ENCODE measurements at regions of chr5 and their contacts with region 1.

Region 1: DNA sequence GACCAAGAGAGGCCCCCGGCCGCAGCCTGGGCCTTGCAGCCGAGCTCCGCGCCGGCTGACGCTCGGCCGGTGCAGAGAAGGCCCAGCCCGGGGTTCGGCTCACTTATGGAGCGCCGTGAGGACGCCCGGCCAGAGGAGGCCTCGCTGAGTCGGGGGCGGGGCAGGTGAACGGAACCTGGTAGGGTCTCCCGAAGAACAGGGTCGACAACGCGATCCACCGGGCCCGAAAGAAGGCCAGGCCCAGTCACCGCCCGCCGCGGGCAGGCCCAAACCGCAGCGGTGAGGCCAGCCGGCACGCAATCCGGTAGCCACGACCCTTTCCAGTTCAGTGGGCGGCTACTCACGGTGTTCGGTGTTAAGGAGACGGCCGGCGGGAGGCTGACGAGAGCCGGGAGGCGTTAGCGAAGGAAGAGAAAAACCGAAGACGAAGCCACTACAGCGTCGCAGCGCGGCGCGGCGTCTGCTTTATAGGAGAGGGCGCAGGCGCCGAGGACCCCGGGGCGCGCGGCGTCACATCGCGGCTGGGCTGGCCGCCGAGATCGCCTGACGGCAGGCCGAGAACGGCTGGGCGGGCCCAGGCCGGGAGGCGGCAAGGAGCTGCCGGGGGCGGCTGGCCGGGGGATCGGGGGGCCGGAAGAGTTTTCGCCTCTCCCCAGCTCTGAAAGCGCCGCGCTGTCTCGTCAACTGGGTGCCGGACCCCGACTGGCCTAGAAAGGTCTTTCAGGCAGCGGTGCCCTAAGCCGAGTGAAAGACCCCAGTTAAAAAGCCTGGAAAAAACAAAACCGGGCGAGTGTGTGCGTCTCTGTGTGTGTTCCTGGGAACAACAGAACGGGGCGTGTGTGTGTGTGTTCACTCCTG is at the start of gene SKP1:
- DNase-seq: peak; percentile 89 to 94
- ATAC-seq: peak; percentile 96
- H3K4me3 ChIP-seq: peak within 1 kb of the TSS; percentile 39 to 89
- H3K27ac ChIP-seq: peak within 1 kb of the TSS; percentile 90 to 96
- H3K4me1 ChIP-seq: no peaks in the 10 kb centered on the region
- H3K27me3 ChIP-seq: no peaks in the 10 kb centered on the region
- total RNA-seq, gene SKP1: 304 to 330 TPM

Region 2: DNA sequence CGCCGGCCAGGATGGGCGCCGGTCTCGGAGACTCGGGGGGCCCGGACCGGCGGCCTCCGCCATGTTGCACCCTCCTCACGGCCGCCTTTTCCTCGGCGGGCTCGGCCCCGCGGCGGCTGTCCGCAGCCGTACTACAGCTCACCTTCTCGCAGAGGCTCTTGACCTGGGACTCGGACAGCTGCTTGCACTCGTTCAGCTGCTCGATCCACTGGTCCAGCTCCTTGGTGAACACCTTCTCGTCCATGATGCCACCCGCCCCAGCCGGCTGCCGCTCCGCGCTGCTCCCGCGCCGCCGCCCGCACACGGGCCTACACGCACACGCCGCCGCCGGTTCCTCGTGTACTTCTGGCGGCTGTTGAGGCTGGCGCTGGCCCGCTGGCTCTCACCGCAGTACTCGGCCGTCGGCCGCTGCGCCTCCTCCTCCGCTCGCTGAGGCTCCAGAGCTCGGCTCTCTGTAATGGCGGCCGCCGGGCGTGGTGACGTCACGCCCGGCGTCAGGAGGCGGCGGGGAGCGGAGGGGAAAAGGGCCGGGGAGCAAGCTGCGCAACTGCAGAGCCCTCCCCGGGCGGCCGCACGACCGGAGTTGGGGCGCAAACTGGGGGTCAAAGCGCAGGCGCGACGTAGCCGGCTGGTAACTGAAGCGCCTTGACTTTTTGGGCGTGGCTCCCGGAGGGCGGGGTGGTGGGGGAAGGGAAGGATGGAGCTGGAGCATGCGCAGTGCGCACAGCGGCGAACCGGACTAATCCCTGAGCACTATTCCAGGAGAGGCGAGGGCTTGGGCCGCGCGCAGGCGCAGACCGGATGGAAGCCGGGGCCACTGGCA is 49.1 kb after region 1 on chr5 and contains the start of gene PPP2CA:
- intact Hi-C with region 1: loop called in 1 of 2 experiments (anchors 2 kb)
- DNase-seq: peak; percentile 99 to 100
- ATAC-seq: peak; percentile 98
- H3K4me3 ChIP-seq: peak within 1 kb of the TSS; percentile 68 to 73
- H3K27ac ChIP-seq: peak within 1 kb of the TSS; percentile 88 to 95
- H3K4me1 ChIP-seq: peaks cover 0 to 4% of the 10 kb centered on the region in 2 donors
- H3K27me3 ChIP-seq: no peaks in the 10 kb centered on the region
- total RNA-seq, gene PPP2CA: 72.4 to 96.6 TPM

Region 3: DNA sequence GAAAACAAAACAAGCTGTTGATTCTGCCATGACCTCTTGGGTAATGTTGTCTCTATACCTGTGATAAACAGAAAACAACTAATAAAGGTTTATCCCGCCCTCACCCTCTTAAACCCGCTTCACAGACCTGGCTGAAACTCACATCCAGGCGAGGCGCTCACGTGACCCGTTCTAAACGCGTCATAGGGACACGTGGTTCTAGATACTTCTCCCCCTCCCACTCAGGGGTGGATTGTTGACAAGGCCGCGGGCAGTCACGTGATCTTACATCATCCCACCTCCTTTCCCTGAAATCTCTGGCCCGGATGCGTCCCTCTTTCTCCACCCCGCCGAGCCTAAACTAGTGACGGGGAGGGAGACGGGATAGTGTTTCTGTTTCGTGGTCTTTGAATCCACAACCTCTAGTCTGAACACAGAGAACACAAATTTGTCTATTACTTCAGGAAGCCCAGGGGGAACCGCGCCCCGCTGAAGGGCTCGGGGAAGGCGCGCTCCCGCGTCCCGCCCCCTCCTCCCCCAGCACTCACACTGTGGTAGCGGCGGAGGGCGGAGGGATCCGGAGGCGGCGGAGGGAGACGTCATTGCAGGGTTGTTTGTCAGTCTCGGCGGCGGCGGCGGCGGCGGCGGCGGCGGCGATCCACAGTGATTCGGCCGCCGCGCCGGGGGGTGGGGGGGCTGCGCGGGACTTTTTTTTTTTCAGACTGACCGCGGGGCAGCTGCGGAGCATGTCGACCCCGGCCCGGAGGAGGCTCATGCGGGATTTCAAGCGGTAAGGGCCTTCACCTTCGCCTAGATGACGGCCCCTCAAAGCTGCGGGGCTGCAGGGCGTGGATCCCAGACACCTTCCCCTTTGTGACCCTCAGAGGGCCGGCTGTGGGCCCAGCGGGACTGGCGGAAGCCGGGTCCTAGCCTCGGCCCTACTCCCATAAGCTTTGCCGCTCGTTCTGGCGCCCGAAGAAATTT is 194.4 kb after region 1 on chr5 and contains the start of gene UBE2B:
- intact Hi-C with region 1: loop called in 1 of 2 experiments (anchors 10 kb)
- DNase-seq: peak; percentile 98 to 99
- ATAC-seq: peak; percentile 99
- H3K4me3 ChIP-seq: peak within 1 kb of the TSS; percentile 65 to 79
- H3K27ac ChIP-seq: peak within 1 kb of the TSS; percentile 86 to 99
- H3K4me1 ChIP-seq: no peaks in the 10 kb centered on the region
- H3K27me3 ChIP-seq: no peaks in the 10 kb centered on the region
- total RNA-seq, gene UBE2B: 96.6 to 99.2 TPM

Region 4: GRCh38 chr5:134917070-134917815 is 740.5 kb after region 1 on chr5:
- intact Hi-C with region 1: no loop called
- DNase-seq: no peak
- ATAC-seq: no peak
- H3K4me3 ChIP-seq: no peak overlapping the region
- H3K27ac ChIP-seq: no peak overlapping the region
- H3K4me1 ChIP-seq: no peaks in the 10 kb centered on the region
- H3K27me3 ChIP-seq: no peaks in the 10 kb centered on the region